ENCODE measurements at regions of chr4 and their contacts with region 1.

Region 1: GRCh38 chr4:15479089-15479912 is 9.6 kb downstream of the CC2D2A start:
- DNase-seq: peak; percentile 44
- H3K4me3 ChIP-seq: no peak overlapping the region
- H3K27ac ChIP-seq: no peak overlapping the region
- H3K4me1 ChIP-seq: no peaks in the 10 kb centered on the region
- CTCF ChIP-seq: peak; percentile 80

Region 2: DNA sequence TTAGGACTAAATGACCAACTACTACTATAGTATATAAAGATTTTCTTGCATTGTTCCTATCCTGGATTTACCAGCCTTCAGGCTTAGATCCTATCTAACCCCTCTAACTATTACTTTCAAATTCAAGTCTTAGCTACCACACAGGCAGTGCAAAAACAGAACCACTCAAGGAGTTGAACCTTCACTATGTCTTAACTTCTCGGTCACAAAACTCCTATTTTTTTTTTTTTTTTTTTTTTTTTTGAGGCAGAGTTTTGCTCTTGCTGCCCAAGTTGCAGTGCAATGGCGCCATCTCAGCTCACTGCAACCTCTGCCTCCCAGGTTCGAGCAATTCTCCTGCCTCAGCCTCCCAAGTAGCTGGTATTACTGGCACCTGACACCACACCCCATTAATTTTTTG is 196.1 kb after region 1 on chr4:
- CTCF ChIA-PET with region 1: no interaction called
- POLR2A ChIA-PET with region 1: no interaction called
- intact Hi-C with region 1: loop called (anchors 1 kb)
- DNase-seq: peak; percentile 49
- H3K4me3 ChIP-seq: peak overlapping the region; percentile 90
- H3K27ac ChIP-seq: peak overlapping the region; percentile 82
- H3K4me1 ChIP-seq: peaks cover 83% of the 10 kb centered on the region
- CTCF ChIP-seq: no peak; the same call in 1 of the 2 replicates

Region 3: DNA sequence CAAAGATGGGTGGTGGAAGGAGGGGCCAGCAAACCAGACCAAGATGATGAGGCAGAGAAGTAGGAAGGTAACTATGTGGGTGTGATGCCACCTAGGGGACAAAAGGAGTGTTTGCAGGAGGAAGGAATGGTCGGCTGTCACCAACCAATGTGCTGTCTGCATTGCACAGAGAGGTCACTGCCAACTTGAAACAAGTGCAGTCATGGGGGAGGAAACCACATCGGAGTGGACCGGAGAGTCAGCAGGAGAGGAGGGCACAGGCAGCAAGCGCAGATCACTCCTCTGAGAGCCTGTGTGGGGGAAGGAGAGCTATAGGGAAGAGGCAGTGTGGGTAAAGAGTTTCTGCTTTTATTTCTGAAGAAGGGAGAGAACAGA is 522.2 kb after region 1 on chr4:
- CTCF ChIA-PET with region 1: no interaction called
- POLR2A ChIA-PET with region 1: no interaction called
- intact Hi-C with region 1: loop called (anchors 1 kb)
- DNase-seq: peak; percentile 75
- H3K4me3 ChIP-seq: no peak overlapping the region
- H3K27ac ChIP-seq: no peak overlapping the region
- H3K4me1 ChIP-seq: no peaks in the 10 kb centered on the region
- CTCF ChIP-seq: peak; percentile 92

Region 4: DNA sequence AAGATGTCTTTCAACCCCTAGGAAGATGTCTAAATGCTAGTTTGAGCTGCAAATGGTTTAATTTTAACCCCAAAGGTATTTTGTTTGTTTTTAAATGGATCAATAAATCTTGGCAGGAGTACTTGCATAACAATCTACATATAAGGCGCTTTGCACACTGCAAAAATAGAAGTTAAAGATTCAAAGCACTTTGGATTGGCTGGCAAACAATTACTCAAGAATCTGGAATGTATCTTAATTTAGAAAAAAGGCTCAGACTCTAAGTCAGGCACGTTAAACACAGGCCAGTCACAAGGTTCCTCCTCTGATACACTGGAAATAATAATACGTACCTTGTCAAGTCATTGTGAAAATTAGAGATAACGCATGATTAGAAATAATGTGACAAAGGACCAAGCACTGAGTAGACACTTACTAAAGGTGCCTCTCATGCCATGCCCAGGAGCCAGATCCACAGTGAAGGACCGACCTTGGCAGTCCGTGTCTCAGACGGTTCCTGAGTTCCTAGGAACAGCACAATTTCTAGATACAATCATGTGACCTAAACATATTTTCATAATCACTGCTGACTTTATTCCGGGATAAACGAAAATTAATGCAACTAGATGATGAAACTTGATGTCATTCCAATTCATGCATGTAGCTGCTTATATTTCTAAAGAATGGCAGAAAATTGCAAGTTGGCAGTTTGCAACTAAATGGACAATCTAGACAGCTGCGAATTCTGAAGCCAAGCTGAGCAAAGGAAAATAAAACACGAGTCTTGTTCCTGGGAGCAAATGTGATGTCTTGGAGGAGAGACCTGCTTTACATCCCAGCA is 554.9 kb after region 1 on chr4:
- CTCF ChIA-PET with region 1: no interaction called
- POLR2A ChIA-PET with region 1: no interaction called
- intact Hi-C with region 1: no loop called
- DNase-seq: no peak
- H3K4me3 ChIP-seq: no peak overlapping the region
- H3K27ac ChIP-seq: no peak overlapping the region
- H3K4me1 ChIP-seq: no peaks in the 10 kb centered on the region
- CTCF ChIP-seq: no peak